ENCODE measurements at regions of chr5 and their contacts with region 1.

Region 1: GRCh38 chr5:35822511-35822910 is 34.2 kb upstream of the IL7R start:
- DNase-seq: peak; percentile 63
- ATAC-seq: no peak
- H3K4me3 Mint-ChIP-seq: peak overlapping the region; percentile 58
- H3K27ac Mint-ChIP-seq: peak overlapping the region; percentile 98
- H3K4me1 Mint-ChIP-seq: peaks cover 89% of the 10 kb centered on the region
- H3K27me3 Mint-ChIP-seq: no peaks in the 10 kb centered on the region

Region 2: GRCh38 chr5:35794684-35795375 is 27.7 kb before region 1 on chr5:
- CTCF ChIA-PET with region 1: interaction called, 12 read pairs
- POLR2A ChIA-PET with region 1: interaction called, 12 read pairs
- intact Hi-C with region 1: loop called in 1 of 2 experiments (anchors 2 kb)
- DNase-seq: peak; percentile 45
- ATAC-seq: peak; percentile 40
- H3K4me3 Mint-ChIP-seq: peak overlapping the region; percentile 25
- H3K27ac Mint-ChIP-seq: peak overlapping the region; percentile 91
- H3K4me1 Mint-ChIP-seq: peaks cover 90% of the 10 kb centered on the region
- H3K27me3 Mint-ChIP-seq: no peaks in the 10 kb centered on the region

Region 3: GRCh38 chr5:35803191-35803651 is 19.3 kb before region 1 on chr5:
- CTCF ChIA-PET with region 1: interaction called, 10 read pairs
- POLR2A ChIA-PET with region 1: no interaction called
- intact Hi-C with region 1: no loop called
- DNase-seq: no peak
- ATAC-seq: peak; percentile 24
- H3K4me3 Mint-ChIP-seq: peak overlapping the region; percentile 0
- H3K27ac Mint-ChIP-seq: peak overlapping the region; percentile 80
- H3K4me1 Mint-ChIP-seq: peaks cover 78% of the 10 kb centered on the region
- H3K27me3 Mint-ChIP-seq: no peaks in the 10 kb centered on the region

Region 4: DNA sequence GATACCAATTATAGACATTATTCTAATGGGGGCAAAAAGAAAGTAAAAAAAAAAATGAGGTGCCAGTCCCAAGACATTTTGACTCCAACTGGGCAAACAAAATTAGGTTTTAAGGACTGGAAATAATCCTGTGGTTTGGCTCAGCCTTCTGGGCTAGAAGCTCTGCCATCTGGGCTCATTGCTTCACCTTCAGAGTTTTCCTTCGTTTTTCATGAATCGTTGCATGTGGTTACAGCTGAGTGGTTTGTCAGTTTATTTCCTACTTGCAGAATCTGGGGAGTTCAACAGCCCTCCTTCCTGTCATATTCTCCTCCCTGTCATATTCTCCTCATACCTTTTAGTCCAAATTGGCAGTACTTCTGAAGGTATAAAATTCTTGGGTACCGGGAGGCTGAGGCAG is 232.1 kb after region 1 on chr5:
- CTCF ChIA-PET with region 1: no interaction called
- POLR2A ChIA-PET with region 1: no interaction called
- intact Hi-C with region 1: no loop called
- DNase-seq: no peak
- ATAC-seq: no peak
- H3K4me3 Mint-ChIP-seq: no peak overlapping the region
- H3K27ac Mint-ChIP-seq: no peak overlapping the region
- H3K4me1 Mint-ChIP-seq: peaks cover 3% of the 10 kb centered on the region
- H3K27me3 Mint-ChIP-seq: peaks cover 12% of the 10 kb centered on the region

Region 5: GRCh38 chr5:36237751-36238150 is 415.2 kb after region 1 on chr5:
- CTCF ChIA-PET with region 1: no interaction called
- POLR2A ChIA-PET with region 1: no interaction called
- intact Hi-C with region 1: no loop called
- DNase-seq: no peak
- ATAC-seq: no peak
- H3K4me3 Mint-ChIP-seq: no peak overlapping the region
- H3K27ac Mint-ChIP-seq: no peak overlapping the region
- H3K4me1 Mint-ChIP-seq: peaks cover 31% of the 10 kb centered on the region
- H3K27me3 Mint-ChIP-seq: no peaks in the 10 kb centered on the region

Measured in activated CD4-positive, alpha-beta T cell treated with anti-CD3 and anti-CD28 coated beads for 36 hours (primary cell).